Testis (tissue), 5 donors: ENCODE measurements at regions of chr9 and their contacts with region 1.

Region 1: GRCh38 chr9:92242260-92243136 is 51.0 kb downstream of the IARS1 start:
- DNase-seq: peak; percentile 48
- H3K4me3 ChIP-seq: no peak overlapping the region
- H3K27ac ChIP-seq: peak overlapping the region in 1 of 2 donors; percentile 63
- H3K4me1 ChIP-seq: peaks cover 5% of the 10 kb centered on the region
- H3K27me3 ChIP-seq: no peaks in the 10 kb centered on the region
- CTCF ChIP-seq: peak; percentile 19 to 44 (median 41)
- POLR2A ChIP-seq: no peak

Region 2: GRCh38 chr9:92140074-92140753 is 102.3 kb before region 1 on chr9:
- intact Hi-C with region 1: loop called (anchors 5 kb)
- DNase-seq: peak; percentile 90
- H3K4me3 ChIP-seq: peak overlapping the region; percentile 45 to 57
- H3K27ac ChIP-seq: no peak overlapping the region
- H3K4me1 ChIP-seq: peaks cover 11% of the 10 kb centered on the region
- H3K27me3 ChIP-seq: no peaks in the 10 kb centered on the region
- CTCF ChIP-seq: peak; percentile 77 to 96 (median 93)
- POLR2A ChIP-seq: no peak

Region 3: DNA sequence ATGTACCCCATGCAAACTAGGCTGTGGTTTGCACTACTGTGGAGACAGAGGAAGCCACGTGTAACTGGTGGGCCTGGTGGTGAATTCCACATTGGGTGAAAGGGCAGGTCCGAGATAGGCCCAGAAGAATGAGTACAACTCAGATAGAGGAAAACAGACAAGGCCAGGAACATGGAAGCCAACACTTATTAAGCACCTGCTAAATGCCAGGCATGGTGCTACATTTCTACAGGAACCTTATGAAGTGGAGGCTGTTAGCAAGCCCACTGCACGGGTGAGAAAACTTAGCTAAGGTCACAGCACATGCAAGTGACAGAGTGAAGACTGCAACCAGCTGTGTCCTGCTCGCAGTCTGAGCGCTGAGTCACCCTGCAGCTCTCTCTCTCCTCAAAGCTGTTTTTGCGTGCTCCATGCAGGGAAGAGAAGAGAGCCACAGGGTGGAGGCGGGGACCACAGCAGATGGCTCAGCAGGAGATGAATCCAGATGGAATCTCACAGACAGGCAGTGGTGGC is 61.8 kb before region 1 on chr9:
- intact Hi-C with region 1: no loop called
- DNase-seq: no peak
- H3K4me3 ChIP-seq: no peak overlapping the region
- H3K27ac ChIP-seq: no peak overlapping the region
- H3K4me1 ChIP-seq: no peaks in the 10 kb centered on the region
- H3K27me3 ChIP-seq: no peaks in the 10 kb centered on the region
- CTCF ChIP-seq: no peak
- POLR2A ChIP-seq: no peak